ENCODE measurements at regions of chr3 and their contacts with region 1.

Region 1: DNA sequence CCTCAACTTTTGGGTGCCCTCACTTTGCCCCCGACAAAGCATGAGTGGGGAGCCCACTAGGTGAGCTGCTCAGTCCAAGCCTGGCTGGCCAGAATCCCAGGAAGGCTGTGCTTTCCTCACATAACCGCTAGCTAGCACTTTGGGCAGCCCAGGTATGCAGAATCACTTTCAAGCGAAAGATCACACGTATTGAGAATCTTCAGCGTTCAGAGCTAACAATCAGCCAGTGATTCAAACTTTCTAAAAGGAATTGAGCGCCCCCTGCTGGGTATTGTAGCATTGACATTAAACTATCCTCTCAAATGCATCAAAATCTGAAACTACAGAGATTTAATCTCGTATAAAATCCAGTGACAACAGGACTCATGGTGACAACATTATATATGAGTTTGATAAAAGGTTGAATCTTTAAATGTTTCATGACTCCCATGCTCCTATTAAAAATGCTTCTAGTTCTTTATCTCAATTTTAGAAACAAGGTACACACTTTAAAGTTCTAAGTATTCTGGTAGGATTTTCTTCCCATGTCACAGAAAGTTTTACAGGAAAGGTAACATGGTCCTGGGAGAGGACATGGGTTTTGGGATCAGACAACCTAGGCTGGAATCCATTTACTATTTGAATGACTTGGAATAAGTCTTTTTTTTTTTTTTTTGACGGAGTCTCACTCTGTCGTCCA is 11.8 kb downstream of the ANAPC13 start:
- DNase-seq: peak; percentile 66
- H3K4me3 ChIP-seq: no peak overlapping the region
- H3K27ac ChIP-seq: no peak overlapping the region
- H3K27me3 ChIP-seq: no peaks in the 10 kb centered on the region
- CTCF ChIP-seq: peak; percentile 72

Region 2: GRCh38 chr3:134299185-134299887 is 174.7 kb before region 1 on chr3:
- CTCF ChIA-PET with region 1: interaction called, 16 read pairs
- POLR2A ChIA-PET with region 1: no interaction called
- DNase-seq: no peak
- H3K4me3 ChIP-seq: no peak overlapping the region
- H3K27ac ChIP-seq: no peak overlapping the region
- H3K27me3 ChIP-seq: no peaks in the 10 kb centered on the region
- CTCF ChIP-seq: peak; percentile 55

Region 3: DNA sequence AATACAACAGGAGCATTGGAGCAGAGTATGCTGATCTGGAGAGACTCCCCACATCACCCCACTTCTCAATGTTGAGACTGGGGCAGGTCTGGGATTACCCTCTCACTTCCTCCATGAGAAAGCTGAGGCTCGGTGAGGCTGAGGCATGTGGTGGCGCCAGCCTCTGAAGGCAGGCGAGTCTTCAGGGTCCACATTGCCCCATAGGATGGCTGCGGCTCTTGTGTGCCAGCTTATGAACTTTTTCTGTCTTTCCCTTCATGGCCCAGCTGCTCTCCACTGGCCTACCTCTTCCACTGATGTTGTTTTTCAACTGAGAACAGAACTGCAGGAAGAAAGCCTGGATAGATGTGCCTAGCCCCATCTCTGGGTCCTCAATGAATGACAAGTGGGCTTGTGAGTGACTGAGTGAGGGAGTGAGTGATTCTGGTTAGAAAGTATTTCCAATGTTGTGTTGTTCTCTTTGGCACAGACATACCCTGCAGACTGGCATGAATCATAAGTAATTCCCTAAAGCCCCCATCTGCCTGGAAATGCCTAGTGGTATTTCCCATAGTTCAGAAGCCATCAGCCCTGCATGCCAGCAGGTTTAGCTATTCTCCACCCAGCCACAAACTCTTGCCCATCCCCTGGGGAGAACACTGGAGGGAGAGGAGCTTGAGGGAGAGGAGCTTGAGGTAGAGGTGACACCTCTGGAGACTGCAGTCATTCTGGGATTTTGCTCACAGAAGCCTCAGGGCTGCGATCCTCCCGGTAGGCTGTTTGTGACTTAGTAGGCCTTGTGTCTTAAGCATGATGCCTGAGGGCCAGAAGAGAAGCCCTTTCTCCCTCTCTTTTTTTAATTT is 156.7 kb before region 1 on chr3:
- CTCF ChIA-PET with region 1: interaction called, 10 read pairs
- POLR2A ChIA-PET with region 1: interaction called, 4 read pairs
- DNase-seq: no peak
- H3K4me3 ChIP-seq: no peak overlapping the region
- H3K27ac ChIP-seq: peak overlapping the region; percentile 31
- H3K27me3 ChIP-seq: no peaks in the 10 kb centered on the region
- CTCF ChIP-seq: no peak

Region 4: GRCh38 chr3:134364061-134364935 is 109.7 kb before region 1 on chr3:
- CTCF ChIA-PET with region 1: interaction called, 38 read pairs
- POLR2A ChIA-PET with region 1: interaction called, 46 read pairs
- DNase-seq: peak; percentile 93
- H3K4me3 ChIP-seq: peak overlapping the region; percentile 38
- H3K27ac ChIP-seq: peak overlapping the region; percentile 96
- H3K27me3 ChIP-seq: no peaks in the 10 kb centered on the region
- CTCF ChIP-seq: no peak

Region 5: GRCh38 chr3:134373994-134374790 is 99.8 kb before region 1 on chr3 and contains the start of gene AMOTL2:
- CTCF ChIA-PET with region 1: interaction called, 18 read pairs
- POLR2A ChIA-PET with region 1: interaction called, 43 read pairs
- DNase-seq: peak; percentile 95
- H3K4me3 ChIP-seq: peak within 1 kb of the TSS; percentile 98
- H3K27ac ChIP-seq: peak within 1 kb of the TSS; percentile 100
- H3K27me3 ChIP-seq: no peaks in the 10 kb centered on the region
- CTCF ChIP-seq: no peak
- polyA plus RNA-seq, gene AMOTL2: 74.5 and 78.9 TPM in 2 replicates

Region 6: DNA sequence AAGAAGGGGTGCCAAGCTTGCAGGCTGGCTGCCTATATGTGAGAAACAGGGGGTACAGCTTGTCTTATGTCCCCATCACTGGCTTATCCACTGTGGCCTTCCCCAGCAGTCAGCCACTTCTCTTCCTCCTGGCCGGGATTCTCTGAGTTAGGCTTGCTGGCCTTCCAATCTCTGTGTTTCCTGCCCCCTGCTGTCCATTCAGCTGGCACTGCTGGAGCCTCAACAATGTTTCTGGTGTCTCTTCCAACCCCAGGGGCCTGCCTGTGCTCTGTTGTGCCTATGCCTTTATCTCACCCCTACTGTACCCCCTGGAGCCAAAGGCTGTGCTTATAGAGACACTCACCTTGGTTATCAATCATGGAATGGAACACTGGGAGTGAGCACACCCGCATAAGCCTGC is 24.7 kb before region 1 on chr3:
- CTCF ChIA-PET with region 1: interaction called, 13 read pairs
- POLR2A ChIA-PET with region 1: no interaction called
- DNase-seq: no peak
- H3K4me3 ChIP-seq: no peak overlapping the region
- H3K27ac ChIP-seq: no peak overlapping the region
- H3K27me3 ChIP-seq: no peaks in the 10 kb centered on the region
- CTCF ChIP-seq: peak; percentile 44

Region 7: DNA sequence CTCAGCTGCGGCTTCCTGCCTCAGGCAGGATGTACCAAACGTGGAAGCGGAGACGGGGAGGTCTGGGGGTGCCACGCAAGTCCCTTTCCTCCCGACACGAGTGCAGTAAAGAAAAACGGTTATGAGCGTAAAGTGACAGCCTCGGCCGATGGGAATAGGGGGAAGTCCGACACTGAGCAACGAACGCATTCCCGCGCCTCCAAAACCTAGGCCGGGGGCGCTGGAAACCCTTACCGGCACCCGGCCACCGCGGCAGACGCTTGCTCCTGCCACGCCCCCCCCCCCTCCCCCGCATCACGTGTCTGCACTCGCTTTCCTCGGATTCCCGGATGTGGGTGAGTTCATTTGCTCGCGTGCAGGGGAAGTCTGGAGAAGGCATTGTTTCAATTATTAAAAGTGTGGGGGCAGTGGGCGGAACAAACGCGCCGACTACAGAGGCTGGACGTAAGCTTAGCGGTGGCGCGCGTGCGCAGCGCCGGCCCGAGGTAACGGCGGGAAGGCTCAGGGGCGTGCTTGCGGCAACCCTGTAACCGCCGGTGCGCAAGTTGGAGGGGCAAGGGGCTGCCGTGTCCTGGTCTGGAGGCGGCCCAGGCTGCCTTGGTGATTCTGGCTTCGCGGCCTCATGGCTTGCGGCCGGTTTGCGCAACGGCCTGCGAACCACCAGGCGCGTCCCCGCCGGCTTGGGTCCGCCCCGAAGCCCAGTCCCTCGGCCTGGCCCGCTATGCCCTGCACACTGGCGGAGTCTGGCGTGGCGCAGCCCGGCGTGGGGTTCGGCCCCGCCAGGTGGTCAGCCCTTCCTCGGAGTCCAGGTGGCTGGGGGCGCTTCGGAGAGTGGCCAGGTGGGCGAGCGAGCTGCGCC is 11.9 kb after region 1 on chr3 and contains the starts of genes ANAPC13 and CEP63:
- CTCF ChIA-PET with region 1: interaction called, 27 read pairs
- POLR2A ChIA-PET with region 1: interaction called, 9 read pairs
- DNase-seq: peak; percentile 98
- H3K4me3 ChIP-seq: peak within 1 kb of the TSS; percentile 87
- H3K27ac ChIP-seq: peak within 1 kb of the TSS; percentile 97
- H3K27me3 ChIP-seq: no peaks in the 10 kb centered on the region
- CTCF ChIP-seq: no peak
- polyA plus RNA-seq, gene ANAPC13: 122 and 176 TPM in 2 replicates
- polyA plus RNA-seq, gene CEP63: 11.0 and 16.3 TPM in 2 replicates